Mucosa of descending colon (tissue), 3 donors: ENCODE measurements at regions of chr3 and their contacts with region 1.

Region 1: DNA sequence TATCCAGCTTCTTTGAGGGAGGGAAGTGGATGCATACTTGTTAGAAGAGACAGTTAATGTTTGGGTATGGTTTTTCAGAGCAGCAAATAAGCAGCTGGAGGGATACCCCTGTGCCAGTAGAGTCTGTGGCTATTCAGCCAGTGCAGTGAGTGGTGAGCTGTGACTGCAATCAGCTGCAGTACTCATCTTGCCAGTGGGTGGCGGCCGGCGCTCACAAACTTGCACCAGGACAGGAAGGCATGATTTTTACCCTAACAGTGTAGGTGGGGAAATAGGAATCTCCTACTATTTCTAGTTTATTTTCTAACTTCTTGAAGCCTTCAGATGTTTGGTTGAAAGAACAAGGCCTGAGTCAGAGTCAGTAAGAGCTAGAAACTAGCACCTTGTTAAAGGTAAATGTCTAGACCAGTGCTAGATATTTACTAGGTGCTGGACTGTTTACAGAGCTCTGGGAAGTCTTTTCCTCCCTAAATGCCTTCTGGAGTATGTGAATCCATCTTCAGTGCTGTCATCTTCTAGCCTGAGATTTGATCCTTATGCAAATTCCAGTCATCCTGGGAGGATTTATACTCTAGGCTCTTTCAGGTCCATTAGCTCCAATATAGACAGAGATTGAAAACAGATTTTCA is 23.6 kb downstream of the TIMP4 start:
- DNase-seq: peak; percentile 75 to 89 (median 87)
- ATAC-seq: peak; percentile 93
- H3K4me3 ChIP-seq: no peak overlapping the region
- H3K4me1 ChIP-seq: no peaks in the 10 kb centered on the region
- CTCF ChIP-seq: peak; percentile 66

Region 2: GRCh38 chr3:12175844-12176453 is 40.8 kb after region 1 on chr3:
- intact Hi-C with region 1: loop called (anchors 5 kb)
- DNase-seq: peak in 2 of 3 donors; percentile 76 to 85
- ATAC-seq: peak; percentile 77
- H3K4me3 ChIP-seq: no peak overlapping the region
- H3K4me1 ChIP-seq: peaks cover 7% of the 10 kb centered on the region
- CTCF ChIP-seq: peak; percentile 71